ENCODE measurements at regions of chr10 and their contacts with region 1.

Region 1: DNA sequence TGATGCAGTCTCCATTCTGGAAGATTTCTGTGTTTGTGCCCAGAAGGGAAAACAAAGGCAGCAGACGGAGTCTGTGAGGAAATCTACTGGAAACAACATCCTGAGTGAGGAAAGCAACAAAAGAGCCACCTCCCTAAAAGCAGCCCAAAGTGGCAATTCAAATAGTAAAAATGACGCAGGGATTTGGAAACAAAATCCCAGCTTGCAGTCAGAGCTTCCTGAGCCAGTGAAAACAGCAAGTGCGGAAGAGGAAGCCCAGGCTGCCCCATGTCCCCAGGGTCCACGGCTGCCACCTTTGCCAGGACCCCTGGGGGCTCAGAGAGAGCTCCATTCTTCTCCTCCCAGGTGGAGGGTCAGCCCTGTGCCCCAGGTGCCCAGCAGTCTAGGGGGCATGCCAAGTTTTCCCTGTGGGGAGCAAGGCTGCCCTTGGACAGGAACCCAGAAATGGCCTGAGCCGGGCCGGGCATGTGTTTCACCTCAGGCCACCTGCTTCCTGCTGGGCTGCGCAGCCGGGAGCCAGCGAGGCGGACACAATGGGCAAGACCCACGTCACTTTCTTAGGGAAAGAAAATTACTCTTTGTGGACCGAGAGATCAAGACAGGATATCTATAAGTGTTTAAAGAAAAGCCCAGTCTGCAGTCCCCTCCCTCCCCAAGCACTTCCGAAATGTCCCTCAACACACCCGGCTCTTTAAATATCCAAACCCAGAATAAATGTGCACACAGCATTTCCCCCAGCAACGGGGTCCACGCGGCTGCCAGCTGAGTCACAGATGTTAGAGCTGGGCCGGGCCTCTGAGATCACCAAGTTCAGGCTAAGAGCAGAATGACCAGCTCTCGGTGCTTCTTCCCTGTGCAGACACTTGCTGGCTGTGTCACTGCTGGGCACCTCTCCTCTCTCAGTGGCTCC is 231.1 kb downstream of the ARHGAP12 start:
- DNase-seq: peak; percentile 98
- H3K4me3 ChIP-seq: peak overlapping the region in 1 of 3 experiments; percentile 24
- H3K27ac ChIP-seq: peak overlapping the region; percentile 90
- H3K4me1 ChIP-seq: peaks cover 57% of the 10 kb centered on the region
- H3K27me3 ChIP-seq: no peaks in the 10 kb centered on the region
- CTCF ChIP-seq: no peak
- POLR2A ChIP-seq: peak; percentile 75

Region 2: DNA sequence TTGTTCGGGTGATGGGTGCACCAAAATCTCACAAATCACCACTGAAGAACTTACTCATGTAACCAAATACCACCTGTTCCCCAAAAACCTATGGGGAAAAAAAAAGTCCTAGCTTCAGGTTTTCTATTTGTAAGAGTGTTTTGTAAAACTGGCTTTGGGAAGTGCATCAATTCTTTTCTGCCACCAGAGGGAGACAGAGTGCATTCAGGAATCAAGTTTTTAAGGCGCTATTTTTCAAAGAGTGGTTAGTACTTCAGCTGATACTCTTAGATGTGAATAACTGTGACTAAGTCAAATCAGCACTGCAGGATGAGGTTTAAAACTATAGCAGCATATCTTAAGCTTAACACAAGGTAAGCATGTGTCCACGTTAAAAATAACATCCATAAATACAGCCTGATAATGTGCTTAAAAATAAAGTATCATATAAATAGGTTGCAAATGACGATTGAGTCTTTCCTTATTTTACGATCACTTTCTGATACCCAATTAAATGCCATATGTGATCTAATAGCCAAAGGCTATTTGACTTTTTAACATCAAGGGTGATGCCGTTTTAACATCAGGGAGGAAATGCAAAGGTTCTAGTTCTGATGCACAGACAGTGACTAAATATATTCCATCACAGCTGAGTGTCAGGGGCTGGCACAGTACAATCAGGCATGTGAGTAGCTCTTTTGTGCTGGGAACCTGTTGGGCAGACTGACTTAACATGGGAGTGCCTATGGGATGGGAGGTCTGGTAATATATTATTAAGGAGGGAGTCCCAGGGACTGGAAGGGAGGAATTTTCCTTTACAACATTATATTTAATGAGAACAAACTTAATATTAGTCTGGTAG is 1057.4 kb before region 1 on chr10:
- CTCF ChIA-PET with region 1: interaction called, 3 read pairs
- POLR2A ChIA-PET with region 1: no interaction called
- dilution Hi-C with region 1: no loop called
- intact Hi-C with region 1: loop called (anchors 1 kb)
- DNase-seq: peak; percentile 86
- H3K4me3 ChIP-seq: no peak overlapping the region
- H3K27ac ChIP-seq: peak overlapping the region; percentile 44
- H3K4me1 ChIP-seq: peaks cover 61% of the 10 kb centered on the region
- H3K27me3 ChIP-seq: peaks cover 0 to 1% of the 10 kb centered on the region in 2 experiments
- CTCF ChIP-seq: peak; percentile 64 to 70
- POLR2A ChIP-seq: no peak

Region 3: GRCh38 chr10:31083765-31084184 is 613.8 kb before region 1 on chr10:
- CTCF ChIA-PET with region 1: no interaction called
- POLR2A ChIA-PET with region 1: no interaction called
- dilution Hi-C with region 1: no loop called
- intact Hi-C with region 1: loop called (anchors 2 kb)
- DNase-seq: peak; percentile 43
- H3K4me3 ChIP-seq: no peak overlapping the region
- H3K27ac ChIP-seq: no peak overlapping the region
- H3K4me1 ChIP-seq: no peaks in the 10 kb centered on the region
- H3K27me3 ChIP-seq: no peaks in the 10 kb centered on the region
- CTCF ChIP-seq: peak; percentile 42 to 54
- POLR2A ChIP-seq: no peak

Region 4: GRCh38 chr10:31526681-31527080 is 170.8 kb before region 1 on chr10:
- CTCF ChIA-PET with region 1: interaction called, 3 read pairs
- POLR2A ChIA-PET with region 1: no interaction called
- dilution Hi-C with region 1: no loop called
- intact Hi-C with region 1: loop called (anchors 2 kb)
- DNase-seq: peak; percentile 26
- H3K4me3 ChIP-seq: no peak overlapping the region
- H3K27ac ChIP-seq: peak overlapping the region; percentile 13
- H3K4me1 ChIP-seq: peaks cover 24% of the 10 kb centered on the region
- H3K27me3 ChIP-seq: no peaks in the 10 kb centered on the region
- CTCF ChIP-seq: no peak
- POLR2A ChIP-seq: no peak

Region 5: DNA sequence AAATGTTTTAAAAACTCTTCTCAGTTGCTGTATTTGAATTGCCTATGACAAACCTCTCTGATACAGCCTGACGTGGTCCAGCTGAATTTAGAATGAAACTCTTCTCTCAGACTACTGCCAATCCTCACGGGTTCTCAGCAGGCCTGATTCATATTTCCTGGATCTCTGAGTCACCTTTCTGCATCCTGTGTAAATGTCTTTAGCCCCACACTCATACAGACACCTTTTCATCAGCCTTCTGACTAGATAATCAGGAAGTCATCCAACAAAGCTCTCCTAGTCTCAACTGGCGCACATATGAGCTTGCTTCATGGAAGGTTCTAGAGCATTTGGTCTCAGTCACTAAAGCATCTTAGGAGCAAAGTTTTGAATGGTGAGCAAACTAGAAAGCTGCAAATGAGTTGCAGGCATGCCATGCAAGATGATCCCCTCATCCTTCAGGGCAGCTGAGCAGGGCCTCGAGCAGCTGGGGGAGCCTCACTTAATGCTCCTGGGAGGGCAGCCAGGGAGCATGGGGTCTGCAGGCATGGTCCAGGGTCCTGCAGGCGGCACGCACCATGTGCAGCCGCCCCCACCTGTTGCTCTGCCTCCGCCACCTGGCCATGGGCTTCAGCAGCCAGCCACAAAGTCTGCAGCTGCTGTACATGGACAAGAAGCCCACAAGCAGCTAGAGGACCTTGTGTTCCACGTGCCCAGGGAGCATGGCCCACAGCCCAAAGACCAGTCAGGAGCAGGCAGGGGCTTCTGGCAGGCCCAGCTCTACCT is 48.3 kb after region 1 on chr10:
- CTCF ChIA-PET with region 1: no interaction called
- POLR2A ChIA-PET with region 1: no interaction called
- dilution Hi-C with region 1: no loop called
- intact Hi-C with region 1: loop called (anchors 2 kb)
- DNase-seq: peak; percentile 86
- H3K4me3 ChIP-seq: no peak overlapping the region
- H3K27ac ChIP-seq: peak overlapping the region; percentile 59
- H3K4me1 ChIP-seq: peaks cover 27% of the 10 kb centered on the region
- H3K27me3 ChIP-seq: no peaks in the 10 kb centered on the region
- CTCF ChIP-seq: no peak
- POLR2A ChIP-seq: no peak

Region 6: GRCh38 chr10:31808258-31809218 is 111.0 kb after region 1 on chr10:
- CTCF ChIA-PET with region 1: interaction called, 5 read pairs
- POLR2A ChIA-PET with region 1: no interaction called
- dilution Hi-C with region 1: no loop called
- intact Hi-C with region 1: loop called (anchors 1 kb)
- DNase-seq: peak; percentile 81
- H3K4me3 ChIP-seq: no peak overlapping the region
- H3K27ac ChIP-seq: peak overlapping the region; percentile 69
- H3K4me1 ChIP-seq: peaks cover 4% of the 10 kb centered on the region
- H3K27me3 ChIP-seq: no peaks in the 10 kb centered on the region
- CTCF ChIP-seq: peak; percentile 10 to 27
- POLR2A ChIP-seq: no peak

Measured in endothelial cell of umbilical vein (primary cell).